PC-3 (cell line): ENCODE measurements at regions of chr2 and their contacts with region 1.

Region 1: DNA sequence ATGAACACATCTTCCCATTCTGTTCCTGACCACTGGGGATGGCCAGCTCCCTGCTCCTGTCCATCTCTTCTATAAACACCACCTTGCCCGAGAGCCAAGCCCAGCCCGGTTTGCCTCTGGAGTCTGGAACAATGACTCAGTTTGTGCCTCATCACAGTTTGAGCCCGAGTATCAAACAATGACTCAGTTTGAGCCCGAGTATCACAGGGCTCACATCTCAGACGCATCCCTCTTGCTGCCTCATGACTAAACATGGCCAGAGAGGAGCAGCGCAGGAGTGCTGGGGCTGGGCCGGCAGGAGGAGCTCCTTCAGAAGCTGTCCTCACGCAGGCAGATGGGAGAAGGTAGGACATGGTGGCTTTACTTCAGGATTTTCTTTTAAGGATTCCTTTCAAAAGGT is 68.7 kb downstream of the PXDN start:
- DNase-seq: peak; percentile 98
- ATAC-seq: peak; percentile 99
- H3K4me3 ChIP-seq: no peak overlapping the region
- H3K27ac ChIP-seq: peak overlapping the region; percentile 84
- H3K4me1 ChIP-seq: peaks cover 24% of the 10 kb centered on the region
- H3K27me3 ChIP-seq: no peaks in the 10 kb centered on the region
- CTCF ChIP-seq: peak; percentile 85

Region 2: GRCh38 chr2:1266351-1266750 is 409.3 kb before region 1 on chr2:
- CTCF ChIA-PET with region 1: no interaction called
- POLR2A ChIA-PET with region 1: no interaction called
- intact Hi-C with region 1: no loop called
- DNase-seq: no peak
- ATAC-seq: no peak
- H3K4me3 ChIP-seq: no peak overlapping the region
- H3K27ac ChIP-seq: no peak overlapping the region
- H3K4me1 ChIP-seq: no peaks in the 10 kb centered on the region
- H3K27me3 ChIP-seq: peaks cover 94% of the 10 kb centered on the region
- CTCF ChIP-seq: no peak

Region 3: DNA sequence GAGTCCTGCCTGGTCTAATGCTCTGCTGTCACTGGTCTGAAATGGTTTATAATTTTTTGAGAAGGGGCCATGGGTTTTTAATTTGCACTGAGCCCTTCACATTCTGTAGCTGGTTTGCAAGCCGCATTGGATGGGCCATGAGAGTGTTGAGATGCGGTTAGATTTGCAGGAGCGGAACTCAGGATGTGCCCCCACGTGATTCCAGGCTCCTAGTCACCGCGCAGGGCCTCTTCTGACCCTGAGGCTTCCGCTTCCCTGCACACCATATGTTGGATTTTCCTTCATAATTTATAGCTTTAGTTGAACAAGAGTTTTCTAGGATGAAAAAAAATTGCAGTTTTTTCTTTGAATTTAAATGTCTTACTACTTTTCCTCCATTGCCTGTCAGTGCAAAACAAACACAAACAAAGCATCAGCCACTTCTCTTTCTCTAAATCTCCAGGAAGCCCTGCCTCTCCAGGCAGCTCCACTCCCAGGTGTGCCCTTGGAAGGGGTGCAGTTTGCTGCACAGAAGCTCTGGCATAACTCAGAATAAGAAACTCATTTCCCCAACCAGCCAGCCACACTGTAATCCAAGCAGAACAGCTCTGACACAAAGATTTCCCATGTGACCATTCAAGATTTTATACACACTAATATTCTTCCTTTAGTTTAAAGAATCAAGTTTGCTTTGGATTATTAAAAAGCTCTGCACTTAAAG is 280.8 kb before region 1 on chr2:
- CTCF ChIA-PET with region 1: no interaction called
- POLR2A ChIA-PET with region 1: no interaction called
- intact Hi-C with region 1: no loop called
- DNase-seq: no peak
- ATAC-seq: no peak
- H3K4me3 ChIP-seq: no peak overlapping the region
- H3K27ac ChIP-seq: no peak overlapping the region
- H3K4me1 ChIP-seq: no peaks in the 10 kb centered on the region
- H3K27me3 ChIP-seq: peaks cover 70% of the 10 kb centered on the region
- CTCF ChIP-seq: no peak

Region 4: DNA sequence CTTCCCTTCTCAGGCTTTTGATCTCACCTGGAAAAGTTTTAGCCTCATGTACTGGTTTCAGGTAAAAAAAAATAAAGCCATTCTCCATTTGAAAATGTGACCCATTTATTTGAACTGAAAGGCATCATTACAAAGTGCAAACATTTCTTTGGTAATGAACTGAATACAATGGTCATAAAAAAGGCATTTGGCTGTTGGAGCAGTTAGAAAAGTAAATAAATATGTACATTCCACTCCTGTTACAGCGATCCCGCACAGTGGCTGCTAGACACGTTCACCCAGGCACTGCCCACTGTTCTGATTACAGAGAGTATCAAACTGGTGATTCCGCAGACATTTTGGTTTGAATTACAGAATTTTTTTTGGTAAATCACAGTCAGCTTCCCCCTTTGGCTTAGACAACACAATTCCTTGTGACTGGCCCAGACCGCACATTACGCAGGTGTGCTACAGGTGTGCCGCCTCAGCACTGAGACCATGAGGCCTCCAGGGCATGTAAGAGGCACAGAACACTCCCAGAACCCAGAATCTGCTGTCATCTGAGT is 43.8 kb before region 1 on chr2:
- CTCF ChIA-PET with region 1: no interaction called
- POLR2A ChIA-PET with region 1: no interaction called
- intact Hi-C with region 1: loop called (anchors 2 kb)
- DNase-seq: peak; percentile 97
- ATAC-seq: peak; percentile 83
- H3K4me3 ChIP-seq: peak overlapping the region; percentile 28; the same call in 1 of the 2 replicates
- H3K27ac ChIP-seq: peak overlapping the region; percentile 98
- H3K4me1 ChIP-seq: peaks cover 76% of the 10 kb centered on the region
- H3K27me3 ChIP-seq: no peaks in the 10 kb centered on the region
- CTCF ChIP-seq: no peak

Region 5: GRCh38 chr2:1721706-1722646 is 46.3 kb after region 1 on chr2:
- CTCF ChIA-PET with region 1: interaction called, 3 read pairs
- POLR2A ChIA-PET with region 1: no interaction called
- intact Hi-C with region 1: loop called (anchors 1 kb)
- DNase-seq: peak; percentile 87
- ATAC-seq: peak; percentile 60
- H3K4me3 ChIP-seq: peak overlapping the region; percentile 45; the same call in 1 of the 2 replicates
- H3K27ac ChIP-seq: peak overlapping the region; percentile 99
- H3K4me1 ChIP-seq: peaks cover 61% of the 10 kb centered on the region
- H3K27me3 ChIP-seq: no peaks in the 10 kb centered on the region
- CTCF ChIP-seq: no peak

Region 6: DNA sequence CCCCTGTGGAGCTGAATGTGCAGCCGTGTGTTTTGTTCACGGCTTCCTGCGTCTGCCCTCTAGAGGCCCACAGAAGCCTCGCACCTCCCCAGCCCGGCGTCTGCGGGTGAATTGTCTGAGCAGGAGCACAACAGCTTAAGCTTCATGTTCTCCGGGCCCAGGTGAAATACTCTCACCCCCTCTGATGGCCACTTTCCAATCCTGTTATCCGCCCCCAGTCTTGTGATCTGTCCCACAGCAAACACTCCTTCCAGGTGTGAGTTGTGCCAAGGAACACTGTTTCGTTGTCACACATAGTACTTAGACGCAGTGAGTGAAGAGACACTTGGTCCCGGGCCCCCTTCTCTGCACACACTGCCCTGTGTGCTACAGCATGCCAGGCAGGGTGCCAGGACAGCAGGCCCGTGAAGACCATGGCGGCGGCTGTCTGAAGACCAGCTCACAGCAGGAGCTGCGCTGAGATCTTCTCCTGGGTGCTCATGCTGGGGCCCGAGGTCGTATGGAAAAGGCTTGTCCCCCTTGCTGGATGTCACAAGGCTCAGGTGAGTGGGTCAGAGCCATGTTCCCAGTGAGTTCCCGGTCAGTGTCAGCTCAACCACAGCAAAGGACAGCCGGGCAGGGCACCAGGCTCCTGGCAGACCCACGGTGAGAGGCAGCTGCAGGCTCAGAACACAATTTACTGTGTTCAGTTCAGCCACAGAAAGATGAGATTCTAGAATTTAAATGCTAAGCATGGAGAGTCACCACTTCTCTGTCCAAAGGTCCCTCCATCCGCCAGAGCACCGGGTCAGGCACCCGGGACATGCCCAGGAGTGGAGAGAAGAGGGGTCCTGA is 75.5 kb after region 1 on chr2:
- CTCF ChIA-PET with region 1: interaction called, 17 read pairs
- POLR2A ChIA-PET with region 1: no interaction called
- intact Hi-C with region 1: loop called (anchors 1 kb)
- DNase-seq: peak; percentile 86
- ATAC-seq: peak; percentile 91
- H3K4me3 ChIP-seq: no peak overlapping the region
- H3K27ac ChIP-seq: no peak overlapping the region
- H3K4me1 ChIP-seq: peaks cover 4% of the 10 kb centered on the region
- H3K27me3 ChIP-seq: no peaks in the 10 kb centered on the region
- CTCF ChIP-seq: peak; percentile 90

Region 7: DNA sequence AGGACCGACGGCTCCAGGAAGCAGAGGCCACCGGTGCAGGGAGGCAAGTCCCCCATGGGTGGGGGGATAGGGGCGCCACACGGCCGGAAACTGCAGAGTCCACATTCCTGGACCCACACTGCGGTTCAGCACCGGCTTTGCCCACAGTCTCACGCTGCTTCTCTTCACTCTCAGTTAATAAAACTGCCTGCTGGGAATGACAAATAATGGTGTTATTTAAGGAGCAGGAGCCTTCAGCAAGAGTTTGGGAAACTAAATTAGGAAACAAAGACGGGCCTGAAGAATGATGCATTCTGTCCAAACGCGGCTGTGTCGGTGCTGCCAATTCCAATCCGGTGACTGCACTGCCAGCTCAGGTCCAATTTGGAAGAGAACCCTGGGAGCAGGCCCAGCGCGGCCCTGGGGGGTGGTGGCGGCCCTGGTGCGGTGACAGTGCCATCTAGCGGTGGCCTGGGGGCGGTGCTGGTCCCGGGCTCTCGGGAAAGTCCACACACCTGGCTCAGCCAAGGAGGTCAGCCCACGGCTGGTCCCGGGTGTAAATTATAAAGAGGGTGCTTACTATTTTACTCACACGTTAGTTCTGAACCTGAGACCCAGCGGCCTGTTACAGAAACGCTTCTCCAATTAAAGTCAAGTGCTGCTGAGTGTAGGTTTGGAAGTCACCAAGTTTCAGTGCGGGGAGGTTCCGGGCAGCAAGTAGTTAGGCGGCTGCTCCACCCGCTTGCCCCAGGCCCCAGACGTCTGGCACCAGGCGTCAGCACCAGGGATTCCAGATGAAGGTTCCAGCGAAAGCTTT is 141.8 kb after region 1 on chr2:
- CTCF ChIA-PET with region 1: no interaction called
- POLR2A ChIA-PET with region 1: no interaction called
- intact Hi-C with region 1: loop called (anchors 1 kb)
- DNase-seq: peak; percentile 89
- ATAC-seq: peak; percentile 94
- H3K4me3 ChIP-seq: peak overlapping the region; percentile 33; the same call in 1 of the 2 replicates
- H3K27ac ChIP-seq: peak overlapping the region; percentile 74
- H3K4me1 ChIP-seq: peaks cover 23% of the 10 kb centered on the region
- H3K27me3 ChIP-seq: no peaks in the 10 kb centered on the region
- CTCF ChIP-seq: peak; percentile 96